Common myeloid progenitor, CD34-positive (primary cell): ENCODE measurements at regions of chr12 and their contacts with region 1.

Region 1: GRCh38 chr12:11581179-11581755 is 68.2 kb upstream of the ETV6 start:
- DNase-seq: peak; percentile 83 to 92 (median 84)
- H3K4me3 ChIP-seq: no peak overlapping the region
- H3K27ac ChIP-seq: no peak overlapping the region
- H3K4me1 ChIP-seq: peaks cover 3 to 23% (median 14%) of the 10 kb centered on the region in 4 experiments
- H3K27me3 ChIP-seq: no peaks in the 10 kb centered on the region

Region 2: DNA sequence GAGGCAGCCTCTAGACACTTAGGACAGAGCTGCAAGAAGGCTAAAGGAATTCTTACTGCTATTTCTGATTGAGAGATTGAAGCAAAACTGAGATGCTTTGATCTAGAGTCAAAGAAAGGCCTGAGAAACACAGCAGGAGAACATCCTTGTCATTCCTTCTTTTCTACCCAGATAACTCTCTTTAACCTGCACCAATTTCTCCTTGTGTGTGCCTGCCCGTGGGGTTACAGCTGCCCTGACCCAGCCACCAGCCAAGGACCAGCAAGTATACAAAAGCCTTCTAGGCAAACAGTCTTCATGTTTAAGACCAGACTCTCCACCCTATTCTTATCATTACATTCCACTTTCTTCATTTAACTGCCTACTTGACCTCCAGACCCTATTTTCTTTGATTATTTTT is 104.2 kb before region 1 on chr12:
- CTCF ChIA-PET with region 1: no interaction called
- POLR2A ChIA-PET with region 1: no interaction called
- DNase-seq: no peak
- H3K4me3 ChIP-seq: no peak overlapping the region
- H3K27ac ChIP-seq: no peak overlapping the region
- H3K4me1 ChIP-seq: no peaks in the 10 kb centered on the region
- H3K27me3 ChIP-seq: no peaks in the 10 kb centered on the region

Region 3: DNA sequence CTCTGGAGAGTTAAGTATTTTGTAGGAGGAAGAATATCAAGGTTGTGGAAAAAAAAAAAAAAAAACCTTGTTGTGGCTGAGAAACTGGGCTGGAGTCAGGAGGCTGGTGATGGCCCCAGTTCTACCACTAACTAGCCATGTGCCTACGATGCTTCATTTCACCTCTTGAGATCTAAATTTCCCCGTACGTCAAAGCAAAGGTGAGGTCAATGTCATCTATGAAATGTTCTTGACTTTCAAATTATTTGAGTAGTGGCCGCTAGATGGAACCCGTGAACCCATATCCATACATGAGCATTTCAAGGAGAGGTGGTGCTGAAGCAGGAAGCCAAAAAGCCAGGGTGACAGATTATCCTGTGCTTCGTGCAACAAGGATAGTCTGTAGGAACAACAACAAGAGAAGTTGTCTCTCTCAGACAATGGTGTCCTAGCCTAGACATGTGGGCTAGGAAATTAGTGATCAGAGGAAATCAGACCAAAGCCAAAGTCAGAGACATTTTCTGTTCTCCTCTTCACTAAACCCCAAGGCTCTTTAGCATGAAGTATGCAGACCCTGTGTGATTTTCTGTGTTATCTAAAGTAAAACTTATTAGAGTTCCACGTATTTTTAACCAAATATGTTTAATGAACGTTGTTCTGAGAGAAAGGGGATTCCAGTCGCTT is 27.3 kb before region 1 on chr12:
- CTCF ChIA-PET with region 1: interaction called, 12 read pairs
- POLR2A ChIA-PET with region 1: no interaction called
- DNase-seq: peak; percentile 72 to 78 (median 77)
- H3K4me3 ChIP-seq: peak overlapping the region in 1 of 7 experiments; percentile 3
- H3K27ac ChIP-seq: no peak overlapping the region
- H3K4me1 ChIP-seq: peaks cover 2 to 23% (median 7%) of the 10 kb centered on the region in 4 experiments
- H3K27me3 ChIP-seq: no peaks in the 10 kb centered on the region

Region 4: DNA sequence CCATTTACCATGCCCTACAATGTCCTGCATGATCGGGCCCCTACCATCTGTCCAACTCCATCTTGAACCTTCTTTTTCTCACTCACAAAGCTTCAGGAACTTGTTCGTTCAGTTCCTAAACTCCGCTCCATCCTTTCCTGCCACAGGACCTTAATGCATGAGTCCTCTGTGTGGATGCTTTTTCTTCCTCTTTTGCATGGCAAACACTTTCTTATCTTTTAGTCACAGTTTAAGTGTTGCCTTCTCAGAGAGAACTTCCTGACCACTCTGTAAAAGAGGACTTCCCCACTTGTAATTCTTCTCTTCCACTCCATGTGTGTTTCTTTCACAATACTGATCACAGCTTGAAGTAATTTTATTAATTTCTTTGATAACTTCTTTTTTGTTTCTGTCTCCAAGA is 13.8 kb after region 1 on chr12:
- CTCF ChIA-PET with region 1: interaction called, 11 read pairs
- POLR2A ChIA-PET with region 1: no interaction called
- DNase-seq: peak; percentile 27 to 83 (median 73)
- H3K4me3 ChIP-seq: peak overlapping the region in 1 of 7 experiments; percentile 6
- H3K27ac ChIP-seq: no peak overlapping the region
- H3K4me1 ChIP-seq: peaks cover 9 to 21% (median 13%) of the 10 kb centered on the region in 4 experiments
- H3K27me3 ChIP-seq: no peaks in the 10 kb centered on the region

Region 5: DNA sequence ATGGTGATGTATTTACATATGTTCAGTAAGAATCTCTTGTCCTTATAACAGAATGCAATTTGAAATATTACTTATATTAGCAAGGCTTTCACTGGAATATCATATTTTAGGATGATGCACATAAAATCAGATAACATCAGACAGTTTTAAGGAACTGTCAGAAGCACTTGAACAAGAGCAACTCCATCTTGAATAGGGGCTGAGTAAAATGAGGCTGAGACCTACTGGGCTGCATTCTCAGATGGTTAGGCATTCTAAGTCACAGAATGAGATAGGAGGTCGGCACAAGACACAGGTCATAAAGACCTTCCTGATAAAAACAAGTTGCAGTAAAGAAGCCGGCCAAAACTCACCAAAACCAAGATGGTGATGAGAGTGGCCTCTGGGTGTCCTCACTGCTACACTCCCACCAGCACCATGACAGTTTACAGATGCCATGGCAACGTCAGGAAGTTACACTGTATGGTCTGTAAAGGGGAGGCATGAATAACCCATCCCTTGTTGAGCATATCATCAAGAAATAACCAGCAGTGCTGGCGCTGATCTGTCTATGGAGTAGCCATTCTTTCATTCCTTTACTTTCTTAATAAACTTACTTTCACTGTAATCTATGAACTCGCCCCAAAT is 40.6 kb after region 1 on chr12:
- CTCF ChIA-PET with region 1: interaction called, 14 read pairs
- POLR2A ChIA-PET with region 1: no interaction called
- DNase-seq: peak; percentile 34 to 70 (median 54)
- H3K4me3 ChIP-seq: no peak overlapping the region
- H3K27ac ChIP-seq: no peak overlapping the region
- H3K4me1 ChIP-seq: peaks cover 15 to 27% (median 23%) of the 10 kb centered on the region in 4 experiments
- H3K27me3 ChIP-seq: no peaks in the 10 kb centered on the region

Region 6: DNA sequence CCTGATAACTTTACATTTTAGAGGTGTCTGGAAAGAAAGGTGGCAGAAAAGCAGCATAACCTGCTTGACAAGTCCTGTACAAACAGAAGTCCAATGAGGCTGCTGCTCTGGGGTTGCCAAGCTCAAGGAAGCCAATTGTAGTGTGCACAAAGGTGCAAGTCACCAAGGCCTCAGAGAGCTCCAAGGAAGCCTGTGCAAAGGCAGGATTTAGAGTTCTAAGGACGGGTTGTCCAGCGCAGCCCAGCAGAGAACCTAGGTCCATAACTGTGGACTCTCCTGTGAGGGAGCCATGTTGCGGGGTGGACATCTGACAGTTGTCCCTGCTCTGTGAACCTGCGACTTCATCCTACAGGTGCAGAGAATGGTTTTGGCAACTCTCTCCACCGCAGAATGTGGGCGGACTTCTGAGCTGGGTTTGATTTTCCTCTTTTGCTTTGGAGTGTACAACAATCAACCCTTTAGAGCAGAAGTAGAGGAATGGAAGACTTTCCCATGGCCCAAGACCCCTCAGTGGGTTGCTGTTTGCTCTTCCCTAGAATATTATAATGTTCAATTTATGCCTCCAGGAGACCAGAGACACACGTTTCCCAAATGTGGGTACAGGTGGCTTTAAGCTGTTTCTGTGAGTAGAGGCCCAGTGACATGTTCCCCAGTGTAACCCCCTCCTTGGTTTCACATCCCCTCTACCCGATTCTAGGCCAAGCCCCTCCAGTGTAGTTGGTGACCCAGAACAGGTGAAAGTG is 149.2 kb after region 1 on chr12:
- CTCF ChIA-PET with region 1: interaction called, 10 read pairs
- POLR2A ChIA-PET with region 1: no interaction called
- DNase-seq: peak in 1 of 3 donors; percentile 38
- H3K4me3 ChIP-seq: no peak overlapping the region
- H3K27ac ChIP-seq: peak overlapping the region; percentile 4 to 70
- H3K4me1 ChIP-seq: peaks cover 35 to 80% (median 70%) of the 10 kb centered on the region in 4 experiments
- H3K27me3 ChIP-seq: no peaks in the 10 kb centered on the region

Region 7: DNA sequence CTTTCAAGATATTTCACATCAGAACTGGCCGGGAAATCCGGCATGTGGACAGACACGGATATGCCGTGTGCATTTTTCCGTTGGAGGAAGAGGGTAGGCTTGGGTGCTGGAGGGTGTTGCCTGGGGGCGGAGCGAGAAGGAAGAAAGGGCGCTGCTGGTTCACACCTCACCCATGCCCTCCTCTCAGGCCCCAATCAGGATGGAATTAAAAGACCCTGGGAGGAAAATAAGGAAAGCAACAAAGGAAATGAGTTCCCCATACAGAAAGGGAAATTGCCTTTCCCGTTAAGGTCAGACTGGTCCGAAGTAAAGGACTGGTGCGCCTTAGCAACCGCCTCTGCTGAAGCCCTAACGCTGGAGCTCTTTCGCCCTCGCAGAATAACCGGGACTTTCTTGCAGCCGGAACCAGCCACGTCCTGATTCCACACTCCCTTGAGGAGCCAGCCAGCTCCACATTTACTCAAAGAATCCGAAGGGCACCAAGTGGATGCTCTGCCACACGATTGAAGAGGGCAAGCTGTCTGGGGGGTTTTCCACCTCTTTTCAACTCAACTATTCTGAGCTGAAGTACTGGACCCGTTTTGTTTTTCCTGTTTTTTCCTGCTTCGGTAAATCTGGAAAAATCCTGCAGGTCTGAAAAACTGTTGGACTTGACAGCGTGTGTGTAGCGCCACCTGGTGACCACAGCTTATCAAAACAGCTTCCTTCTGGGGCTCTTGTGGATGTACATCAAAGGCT is 451.8 kb after region 1 on chr12:
- CTCF ChIA-PET with region 1: interaction called, 65 read pairs
- POLR2A ChIA-PET with region 1: no interaction called
- DNase-seq: peak; percentile 77 to 84 (median 77)
- H3K4me3 ChIP-seq: peak overlapping the region; percentile 46 to 81 (median 62)
- H3K27ac ChIP-seq: no peak overlapping the region
- H3K4me1 ChIP-seq: peaks cover 4 to 33% (median 20%) of the 10 kb centered on the region in 4 experiments
- H3K27me3 ChIP-seq: no peaks in the 10 kb centered on the region